H1 (cell line): ENCODE measurements at regions of chr1 and their contacts with region 1.

Region 1: DNA sequence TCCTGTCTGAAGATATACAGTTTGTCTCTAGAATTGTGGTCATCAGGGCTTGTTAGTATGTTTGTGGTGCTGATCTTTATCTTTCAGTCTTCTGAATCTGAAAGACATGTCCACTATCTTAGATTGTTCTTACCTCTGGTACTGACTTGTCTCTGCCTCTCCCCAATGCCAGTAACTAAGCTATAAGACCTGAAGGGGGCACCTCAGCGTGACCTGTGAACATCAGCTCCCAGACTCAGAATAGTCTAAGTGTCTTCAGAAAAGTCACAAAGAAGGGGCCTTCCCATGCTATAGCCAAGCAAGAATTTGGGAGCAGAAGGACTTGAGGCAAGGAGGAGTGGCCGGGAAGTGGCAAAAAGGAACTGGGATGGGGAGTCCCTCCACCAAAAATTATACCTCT is 178.1 kb downstream of the NTNG1 start:
- DNase-seq: no peak
- H3K4me3 ChIP-seq: no peak overlapping the region
- H3K27ac ChIP-seq: no peak overlapping the region
- H3K4me1 ChIP-seq: peaks cover 0 to 2% (median 0%) of the 10 kb centered on the region in 4 experiments; a peak in 1 of 7 replicates
- H3K27me3 ChIP-seq: no peaks in the 10 kb centered on the region
- CTCF ChIP-seq: peak; percentile 5 to 40 (median 31); a peak in 3 of 4 replicates
- EP300 ChIP-seq: no peak
- POLR2A ChIP-seq: no peak
- RAD21 ChIP-seq: peak; percentile 38 to 45; a peak in 3 of 4 replicates

Region 2: DNA sequence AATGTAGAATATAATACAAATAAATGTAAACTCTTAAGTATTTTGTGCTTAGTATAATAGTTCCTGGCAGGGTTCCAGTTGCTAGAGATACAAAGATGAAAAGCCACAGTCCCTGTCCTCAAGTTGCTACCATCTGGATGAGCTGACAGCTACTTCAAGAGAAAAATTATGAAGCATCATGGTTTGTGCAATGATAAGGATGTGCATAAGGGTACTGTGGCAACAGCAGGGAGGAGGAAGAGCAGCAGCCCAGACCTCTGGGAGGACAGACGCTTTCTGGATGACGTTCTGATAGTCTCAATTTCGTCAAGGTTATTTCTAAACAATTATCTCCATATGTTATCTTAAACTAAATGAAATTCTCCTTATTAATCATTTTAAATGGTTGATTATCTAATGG is 20.8 kb after region 1 on chr1:
- CTCF ChIA-PET with region 1: interaction called, 16 read pairs
- POLR2A ChIA-PET with region 1: no interaction called
- DNase-seq: no peak
- H3K4me3 ChIP-seq: no peak overlapping the region
- H3K27ac ChIP-seq: no peak overlapping the region
- H3K4me1 ChIP-seq: peaks cover 0 to 2% (median 0%) of the 10 kb centered on the region in 4 experiments; a peak in 2 of 7 replicates
- H3K27me3 ChIP-seq: no peaks in the 10 kb centered on the region
- CTCF ChIP-seq: no peak
- EP300 ChIP-seq: no peak
- POLR2A ChIP-seq: no peak
- RAD21 ChIP-seq: no peak

Region 3: GRCh38 chr1:107394301-107394700 is 75.4 kb after region 1 on chr1:
- CTCF ChIA-PET with region 1: no interaction called
- POLR2A ChIA-PET with region 1: no interaction called
- DNase-seq: no peak
- H3K4me3 ChIP-seq: no peak overlapping the region
- H3K27ac ChIP-seq: no peak overlapping the region
- H3K4me1 ChIP-seq: peaks cover 0 to 9% (median 3%) of the 10 kb centered on the region in 4 experiments; a peak in 3 of 7 replicates
- H3K27me3 ChIP-seq: no peaks in the 10 kb centered on the region
- CTCF ChIP-seq: no peak
- EP300 ChIP-seq: no peak
- POLR2A ChIP-seq: no peak
- RAD21 ChIP-seq: no peak

Region 4: GRCh38 chr1:107480548-107481415 is 161.8 kb after region 1 on chr1:
- CTCF ChIA-PET with region 1: no interaction called
- POLR2A ChIA-PET with region 1: no interaction called
- DNase-seq: no peak
- H3K4me3 ChIP-seq: no peak overlapping the region
- H3K27ac ChIP-seq: no peak overlapping the region
- H3K4me1 ChIP-seq: no peaks in the 10 kb centered on the region
- H3K27me3 ChIP-seq: no peaks in the 10 kb centered on the region
- CTCF ChIP-seq: no peak
- EP300 ChIP-seq: no peak
- POLR2A ChIP-seq: no peak
- RAD21 ChIP-seq: no peak